ENCODE measurements at regions of chr14 and their contacts with region 1.

Region 1: GRCh38 chr14:92531106-92531873 is 17.7 kb downstream of the RIN3 start:
- DNase-seq: peak; percentile 96
- ATAC-seq: peak; percentile 84
- H3K4me3 Mint-ChIP-seq: peak overlapping the region; percentile 60
- H3K27ac Mint-ChIP-seq: peak overlapping the region; percentile 99
- H3K4me1 Mint-ChIP-seq: peaks cover 86% of the 10 kb centered on the region
- H3K27me3 Mint-ChIP-seq: no peaks in the 10 kb centered on the region
- CTCF ChIP-seq: no peak

Region 2: GRCh38 chr14:92513204-92513973 is 17.9 kb before region 1 on chr14 and contains the start of gene RIN3:
- CTCF ChIA-PET with region 1: interaction called, 3 read pairs
- POLR2A ChIA-PET with region 1: interaction called, 34 read pairs
- intact Hi-C with region 1: loop called (anchors 2 kb)
- DNase-seq: peak; percentile 70
- ATAC-seq: peak; percentile 47
- H3K4me3 Mint-ChIP-seq: peak within 1 kb of the TSS; percentile 66
- H3K27ac Mint-ChIP-seq: peak within 1 kb of the TSS; percentile 84
- H3K4me1 Mint-ChIP-seq: peaks cover 31% of the 10 kb centered on the region
- H3K27me3 Mint-ChIP-seq: no peaks in the 10 kb centered on the region
- CTCF ChIP-seq: no peak
- total RNA-seq, gene RIN3: 61.3 to 62.4 TPM

Region 3: GRCh38 chr14:92520092-92520745 is 11.1 kb before region 1 on chr14:
- CTCF ChIA-PET with region 1: interaction called, 3 read pairs
- POLR2A ChIA-PET with region 1: interaction called, 34 read pairs
- intact Hi-C with region 1: loop called (anchors 2 kb)
- DNase-seq: peak; percentile 62
- ATAC-seq: no peak
- H3K4me3 Mint-ChIP-seq: no peak overlapping the region
- H3K27ac Mint-ChIP-seq: peak overlapping the region; percentile 79
- H3K4me1 Mint-ChIP-seq: peaks cover 82% of the 10 kb centered on the region
- H3K27me3 Mint-ChIP-seq: no peaks in the 10 kb centered on the region
- CTCF ChIP-seq: no peak

Region 4: GRCh38 chr14:92542766-92543554 is 11.7 kb after region 1 on chr14:
- CTCF ChIA-PET with region 1: no interaction called
- POLR2A ChIA-PET with region 1: interaction called, 14 read pairs
- intact Hi-C with region 1: no loop called
- DNase-seq: no peak
- ATAC-seq: no peak
- H3K4me3 Mint-ChIP-seq: no peak overlapping the region
- H3K27ac Mint-ChIP-seq: peak overlapping the region; percentile 58
- H3K4me1 Mint-ChIP-seq: peaks cover 62% of the 10 kb centered on the region
- H3K27me3 Mint-ChIP-seq: no peaks in the 10 kb centered on the region
- CTCF ChIP-seq: no peak

Region 5: DNA sequence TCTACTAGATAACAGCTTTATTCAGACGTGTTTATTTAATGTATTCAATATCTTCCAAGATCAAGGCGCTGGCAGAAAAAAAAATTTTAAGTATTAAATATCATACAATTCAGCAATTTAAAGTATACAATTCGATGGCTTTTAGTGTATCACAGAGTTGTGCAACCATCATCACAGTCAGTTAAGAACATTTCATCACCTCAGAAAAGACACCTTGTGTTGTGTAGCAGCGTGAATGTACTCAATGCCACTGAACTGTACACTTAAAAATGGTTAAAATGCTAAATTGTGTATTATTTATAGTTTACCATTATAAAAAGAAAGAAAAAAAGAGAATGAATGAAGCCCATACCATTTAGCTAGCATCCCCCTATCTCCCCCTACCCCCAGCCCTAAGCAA is 78.7 kb after region 1 on chr14:
- CTCF ChIA-PET with region 1: no interaction called
- POLR2A ChIA-PET with region 1: no interaction called
- intact Hi-C with region 1: no loop called
- DNase-seq: no peak
- ATAC-seq: no peak
- H3K4me3 Mint-ChIP-seq: no peak overlapping the region
- H3K27ac Mint-ChIP-seq: peak overlapping the region; percentile 20
- H3K4me1 Mint-ChIP-seq: peaks cover 41% of the 10 kb centered on the region
- H3K27me3 Mint-ChIP-seq: no peaks in the 10 kb centered on the region
- CTCF ChIP-seq: no peak

Region 6: GRCh38 chr14:92651106-92651757 is 119.9 kb after region 1 on chr14:
- CTCF ChIA-PET with region 1: no interaction called
- POLR2A ChIA-PET with region 1: no interaction called
- intact Hi-C with region 1: no loop called
- DNase-seq: peak; percentile 94
- ATAC-seq: peak; percentile 82
- H3K4me3 Mint-ChIP-seq: peak overlapping the region; percentile 94
- H3K27ac Mint-ChIP-seq: peak overlapping the region; percentile 97
- H3K4me1 Mint-ChIP-seq: peaks cover 73% of the 10 kb centered on the region
- H3K27me3 Mint-ChIP-seq: no peaks in the 10 kb centered on the region
- CTCF ChIP-seq: no peak